ENCODE measurements at regions of chr2 and their contacts with region 1.

Region 1: DNA sequence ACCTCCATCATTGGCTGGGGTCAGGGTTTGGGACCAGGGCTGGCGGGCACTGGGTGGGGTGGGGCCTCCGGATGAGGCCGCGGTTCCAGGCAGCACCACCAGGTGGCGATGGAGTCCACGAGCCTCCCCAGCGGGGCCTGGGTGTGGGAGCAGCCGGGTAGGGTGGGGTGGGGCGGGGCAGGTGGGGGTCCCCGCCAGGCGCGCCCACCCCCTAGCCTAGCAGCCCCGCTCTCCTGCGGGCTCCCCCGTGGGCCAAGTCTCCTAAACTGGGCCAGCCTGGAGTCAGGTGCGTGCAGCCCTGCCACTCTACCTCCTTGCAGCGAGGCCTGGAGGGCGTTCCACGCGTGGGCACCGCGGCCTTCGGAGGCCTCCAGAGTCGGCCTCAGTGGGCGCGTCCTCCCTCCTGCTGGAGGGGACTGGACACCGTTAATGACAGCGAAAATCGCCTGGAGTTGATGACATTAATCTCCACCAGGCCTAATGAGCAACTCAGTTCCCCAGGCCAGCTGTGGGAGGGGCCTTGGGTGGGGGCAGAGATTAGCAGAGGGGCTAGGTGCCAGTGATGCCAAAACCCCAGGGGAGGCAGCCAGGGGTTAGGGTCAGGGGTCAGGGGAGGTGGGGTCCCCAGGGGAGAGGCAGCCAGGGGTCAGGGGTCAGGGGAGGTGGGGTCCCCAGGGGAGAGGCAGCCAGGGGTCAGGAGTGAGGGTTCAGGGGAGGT is 187.6 kb downstream of the TWIST2 start:
- DNase-seq: peak; percentile 48 to 86 (median 80)
- ATAC-seq: peak; percentile 77 to 89
- H3K4me3 ChIP-seq: no peak overlapping the region
- H3K27ac ChIP-seq: no peak overlapping the region
- H3K4me1 ChIP-seq: no peaks in the 10 kb centered on the region
- H3K27me3 ChIP-seq: no peaks in the 10 kb centered on the region

Region 2: GRCh38 chr2:239264838-239265651 is 229.5 kb after region 1 on chr2:
- intact Hi-C with region 1: no loop called
- DNase-seq: peak in 1 of 3 donors; percentile 72
- ATAC-seq: peak; percentile 24 to 67
- H3K4me3 ChIP-seq: no peak overlapping the region
- H3K27ac ChIP-seq: peak overlapping the region; percentile 75
- H3K4me1 ChIP-seq: peaks cover 37% of the 10 kb centered on the region
- H3K27me3 ChIP-seq: no peaks in the 10 kb centered on the region

Region 3: DNA sequence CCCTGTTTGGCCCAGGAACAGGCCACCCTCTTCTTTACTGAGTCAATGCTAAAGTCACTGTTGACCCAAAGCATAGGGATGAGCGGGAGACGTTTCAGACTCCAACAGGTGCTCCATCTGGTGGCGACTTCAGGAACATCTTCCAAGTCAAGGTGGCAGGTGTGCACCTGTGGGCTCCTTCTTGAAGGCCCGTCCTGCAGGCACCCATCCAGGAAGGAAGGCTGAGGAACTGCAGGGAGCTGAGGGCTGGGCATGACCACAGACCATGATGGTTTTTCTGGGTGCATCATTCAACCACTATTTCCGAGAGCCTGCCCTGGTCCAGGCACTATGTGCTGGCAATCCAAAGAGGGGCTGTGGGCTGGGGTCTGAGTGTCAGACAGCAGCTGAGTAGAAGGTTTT is 846.8 kb after region 1 on chr2:
- intact Hi-C with region 1: loop called in 2 of 4 experiments (anchors 5 to 10 kb)
- DNase-seq: peak in 2 of 3 donors; percentile 63 to 75
- ATAC-seq: peak; percentile 68 to 74
- H3K4me3 ChIP-seq: no peak overlapping the region
- H3K27ac ChIP-seq: no peak overlapping the region
- H3K4me1 ChIP-seq: no peaks in the 10 kb centered on the region
- H3K27me3 ChIP-seq: no peaks in the 10 kb centered on the region

Region 4: DNA sequence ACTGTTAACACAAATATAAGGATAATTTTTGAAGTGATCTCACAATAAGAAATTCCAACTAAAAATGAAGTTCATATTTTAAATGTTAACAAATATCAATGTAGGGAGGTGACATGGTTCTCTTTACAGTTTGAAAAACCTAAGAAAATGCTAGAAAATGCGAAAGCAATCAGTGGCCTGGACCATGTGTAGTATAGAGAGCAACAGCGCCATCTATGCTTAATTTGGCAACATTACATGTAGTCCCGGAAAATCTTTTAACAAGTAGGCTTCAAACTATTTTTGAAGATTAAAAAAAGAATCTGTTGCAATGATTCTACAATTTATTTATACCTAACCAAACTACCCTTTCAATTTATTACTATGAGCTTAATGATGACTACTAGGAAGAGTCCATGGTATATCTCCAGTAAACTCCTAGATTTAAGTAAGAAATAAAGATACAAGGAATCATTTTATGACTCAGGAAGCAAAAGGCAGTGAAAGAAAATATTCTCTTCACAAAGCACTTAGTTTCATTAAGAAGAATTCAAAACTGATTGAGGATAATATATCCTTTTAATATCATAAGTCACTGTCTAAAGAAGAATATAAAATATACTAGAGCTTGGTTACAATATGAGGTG is 956.3 kb after region 1 on chr2:
- intact Hi-C with region 1: loop called in 2 of 4 experiments (anchors 10 kb)
- DNase-seq: no peak
- ATAC-seq: peak in 1 of 2 donors; percentile 61
- H3K4me3 ChIP-seq: no peak overlapping the region
- H3K27ac ChIP-seq: no peak overlapping the region
- H3K4me1 ChIP-seq: no peaks in the 10 kb centered on the region
- H3K27me3 ChIP-seq: no peaks in the 10 kb centered on the region

Region 5: GRCh38 chr2:240143801-240144648 is 1108.5 kb after region 1 on chr2:
- intact Hi-C with region 1: loop called in 2 of 4 experiments (anchors 5 to 10 kb)
- DNase-seq: peak; percentile 64 to 89 (median 84)
- ATAC-seq: peak; percentile 67 to 80
- H3K4me3 ChIP-seq: no peak overlapping the region
- H3K27ac ChIP-seq: no peak overlapping the region
- H3K4me1 ChIP-seq: no peaks in the 10 kb centered on the region
- H3K27me3 ChIP-seq: no peaks in the 10 kb centered on the region